HEK293 (cell line): ENCODE measurements at regions of chr16 and their contacts with region 1.

Region 1: GRCh38 chr16:3690470-3690928 is 26.8 kb downstream of the TRAP1 start:
- H3K4me3 ChIP-seq: no peak overlapping the region
- H3K27ac ChIP-seq: no peak overlapping the region
- H3K4me1 ChIP-seq: no peaks in the 10 kb centered on the region
- CTCF ChIP-seq: peak; percentile 92

Region 2: GRCh38 chr16:3701531-3701930 is 11.0 kb after region 1 on chr16:
- CTCF ChIA-PET with region 1: interaction called, 27 read pairs
- POLR2A ChIA-PET with region 1: interaction called, 3 read pairs
- H3K4me3 ChIP-seq: no peak overlapping the region
- H3K27ac ChIP-seq: no peak overlapping the region
- H3K4me1 ChIP-seq: no peaks in the 10 kb centered on the region
- CTCF ChIP-seq: no peak

Region 3: GRCh38 chr16:3712861-3713372 is 22.4 kb after region 1 on chr16:
- CTCF ChIA-PET with region 1: interaction called, 16 read pairs
- POLR2A ChIA-PET with region 1: interaction called, 3 read pairs
- H3K4me3 ChIP-seq: no peak overlapping the region
- H3K27ac ChIP-seq: peak overlapping the region; percentile 7; the same call in 1 of the 2 replicates
- H3K4me1 ChIP-seq: no peaks in the 10 kb centered on the region
- CTCF ChIP-seq: no peak

Region 4: DNA sequence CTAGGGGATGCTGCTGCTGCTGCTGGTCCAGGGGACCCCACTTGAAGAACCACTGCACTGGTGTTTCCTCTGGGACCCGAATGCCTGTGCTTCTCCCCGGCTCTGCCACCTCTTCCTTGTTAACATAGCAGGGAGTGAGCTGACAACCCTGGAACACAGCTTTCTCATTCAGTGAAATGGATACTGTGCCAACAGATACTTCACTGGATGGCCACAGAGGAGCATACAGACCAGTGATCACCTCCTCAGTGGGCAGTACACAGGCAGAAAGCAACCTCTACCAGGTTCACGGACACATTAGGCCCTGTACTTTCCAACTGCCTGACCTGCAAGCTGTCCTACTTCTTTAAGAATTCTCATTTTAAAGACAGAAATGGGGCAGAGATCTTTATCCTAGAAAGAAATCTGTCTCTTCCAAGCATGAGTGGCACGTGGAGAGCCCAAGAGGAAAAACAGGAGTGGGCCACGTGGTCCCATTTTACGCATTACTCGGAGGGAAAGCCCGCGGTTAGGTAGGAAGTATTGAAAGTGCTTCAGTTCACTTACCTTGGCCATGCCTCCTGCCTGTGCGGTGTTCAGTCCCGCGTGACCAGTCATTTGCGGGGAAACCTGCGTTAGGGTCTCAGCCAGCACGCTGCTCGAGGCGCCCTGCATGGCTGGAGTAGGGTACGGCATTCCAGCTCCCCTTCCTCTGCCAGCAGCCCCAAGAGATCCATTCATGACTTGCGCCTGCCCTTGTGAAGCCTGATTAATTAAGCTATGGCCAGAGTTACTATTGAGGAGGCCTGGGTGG is 159.4 kb after region 1 on chr16:
- CTCF ChIA-PET with region 1: interaction called, 6 read pairs
- POLR2A ChIA-PET with region 1: interaction called, 11 read pairs
- H3K4me3 ChIP-seq: no peak overlapping the region
- H3K27ac ChIP-seq: no peak overlapping the region
- H3K4me1 ChIP-seq: peaks cover 23% of the 10 kb centered on the region
- CTCF ChIP-seq: no peak